ENCODE measurements at regions of chr21 and their contacts with region 1.

Region 1: DNA sequence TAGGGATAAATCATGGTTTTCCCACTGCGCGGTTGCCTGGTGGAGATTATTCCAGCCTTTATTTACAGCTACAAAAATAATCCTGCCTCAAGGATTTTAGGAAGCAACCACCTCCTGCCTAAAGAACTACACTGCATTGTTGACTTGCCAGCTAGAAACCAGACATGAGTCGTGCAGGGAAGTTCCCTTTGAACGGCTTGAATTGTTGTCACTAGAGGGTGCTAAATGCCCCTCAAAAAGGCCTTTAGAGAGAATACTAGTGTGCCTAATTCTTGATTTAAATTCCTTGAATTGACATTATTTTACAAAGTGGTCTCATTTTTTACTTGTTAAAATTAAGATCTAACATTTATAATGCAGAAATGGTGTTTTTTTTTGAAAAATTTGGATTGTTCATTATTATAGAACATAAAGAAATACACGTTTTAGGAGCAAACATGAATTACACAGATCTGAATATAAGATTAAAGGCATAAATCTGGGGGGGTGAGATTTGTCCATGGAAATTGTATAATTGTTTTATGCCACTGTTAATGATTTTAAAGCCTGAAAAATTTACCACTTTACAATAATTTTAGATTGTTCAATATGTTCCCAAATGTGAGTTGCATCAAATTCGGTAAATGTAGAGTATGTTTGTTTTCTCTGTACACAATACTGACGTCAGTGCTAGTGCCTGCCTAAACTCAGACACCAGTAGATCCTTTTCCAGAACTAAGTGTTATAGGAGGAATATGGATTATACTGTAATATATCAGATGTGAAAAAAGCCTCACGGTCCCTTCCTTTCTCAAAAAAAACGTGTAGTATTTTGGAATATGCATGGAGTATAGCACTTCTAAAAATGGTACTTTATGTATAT is 7.6 kb upstream of the ERG start:
- DNase-seq: peak; percentile 40
- ATAC-seq: peak; percentile 76
- H3K4me3 Mint-ChIP-seq: no peak overlapping the region
- H3K27ac Mint-ChIP-seq: no peak overlapping the region
- H3K4me1 Mint-ChIP-seq: peaks cover 7% of the 10 kb centered on the region
- H3K27me3 Mint-ChIP-seq: peaks cover 19% of the 10 kb centered on the region

Region 2: GRCh38 chr21:37974081-37974480 is 531.8 kb before region 1 on chr21:
- CTCF ChIA-PET with region 1: no interaction called
- POLR2A ChIA-PET with region 1: no interaction called
- intact Hi-C with region 1: no loop called
- DNase-seq: no peak
- ATAC-seq: no peak
- H3K4me3 Mint-ChIP-seq: no peak overlapping the region
- H3K27ac Mint-ChIP-seq: no peak overlapping the region
- H3K4me1 Mint-ChIP-seq: no peaks in the 10 kb centered on the region
- H3K27me3 Mint-ChIP-seq: peaks cover 7% of the 10 kb centered on the region

Region 3: GRCh38 chr21:38478782-38479181 is 27.1 kb before region 1 on chr21:
- CTCF ChIA-PET with region 1: no interaction called
- POLR2A ChIA-PET with region 1: no interaction called
- intact Hi-C with region 1: no loop called
- DNase-seq: peak; percentile 52
- ATAC-seq: peak; percentile 94
- H3K4me3 Mint-ChIP-seq: no peak overlapping the region
- H3K27ac Mint-ChIP-seq: no peak overlapping the region
- H3K4me1 Mint-ChIP-seq: peaks cover 15% of the 10 kb centered on the region
- H3K27me3 Mint-ChIP-seq: peaks cover 56% of the 10 kb centered on the region

Region 4: DNA sequence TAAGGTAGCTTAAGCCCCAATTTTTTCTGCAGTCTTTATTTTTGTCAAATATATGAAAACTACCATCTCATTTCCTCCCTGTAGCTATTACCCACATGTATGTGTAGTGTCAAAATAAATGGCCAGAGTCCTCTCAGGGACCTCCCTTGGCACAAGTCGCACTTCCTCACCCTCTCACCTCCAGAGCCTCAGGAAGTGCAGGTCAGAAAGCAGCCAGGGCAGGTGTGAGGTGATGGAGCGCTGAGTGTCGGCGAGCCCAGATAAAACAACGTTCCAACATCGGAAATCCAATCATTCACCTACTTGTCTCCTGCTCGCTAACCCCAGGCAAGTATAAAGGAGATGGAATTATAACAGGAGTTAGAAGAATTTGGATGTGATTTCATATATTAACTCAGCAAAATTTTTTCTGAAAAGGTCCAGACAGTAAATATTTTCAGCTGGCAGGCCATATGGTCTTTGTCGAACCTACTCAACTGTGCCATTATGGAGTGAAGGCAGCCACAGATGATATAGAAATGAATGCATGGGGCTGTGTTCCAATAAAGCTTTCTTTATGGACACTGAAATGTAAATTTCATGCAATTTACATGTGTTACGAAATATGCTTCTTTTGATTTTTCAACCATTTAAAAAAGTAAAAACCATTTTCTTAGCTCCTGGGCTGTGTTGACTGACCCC is 69.2 kb after region 1 on chr21:
- CTCF ChIA-PET with region 1: no interaction called
- POLR2A ChIA-PET with region 1: no interaction called
- intact Hi-C with region 1: no loop called
- DNase-seq: no peak
- ATAC-seq: no peak
- H3K4me3 Mint-ChIP-seq: no peak overlapping the region
- H3K27ac Mint-ChIP-seq: no peak overlapping the region
- H3K4me1 Mint-ChIP-seq: no peaks in the 10 kb centered on the region
- H3K27me3 Mint-ChIP-seq: no peaks in the 10 kb centered on the region

Region 5: DNA sequence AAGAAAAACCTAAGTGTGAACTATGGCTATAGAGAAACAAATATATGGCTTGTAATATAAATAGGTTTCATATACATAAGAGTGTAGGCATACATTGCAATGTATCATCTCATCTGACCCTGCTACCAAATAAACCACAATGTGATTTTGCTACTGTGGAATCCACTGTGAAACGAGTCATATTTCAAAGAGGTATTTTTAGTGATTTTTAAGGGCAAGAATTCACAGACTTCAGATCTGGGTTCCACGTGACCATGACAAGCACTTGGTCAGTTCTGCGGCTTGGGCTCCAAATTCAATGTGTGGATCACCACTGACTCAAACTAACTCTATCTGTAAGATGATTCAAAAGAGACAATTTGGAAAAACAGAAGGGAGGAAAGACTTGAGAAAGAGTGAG is 139.4 kb after region 1 on chr21:
- CTCF ChIA-PET with region 1: no interaction called
- POLR2A ChIA-PET with region 1: no interaction called
- intact Hi-C with region 1: loop called in 1 of 2 experiments (anchors 10 kb)
- DNase-seq: no peak
- ATAC-seq: peak; percentile 31
- H3K4me3 Mint-ChIP-seq: no peak overlapping the region
- H3K27ac Mint-ChIP-seq: peak overlapping the region; percentile 51
- H3K4me1 Mint-ChIP-seq: peaks cover 19% of the 10 kb centered on the region
- H3K27me3 Mint-ChIP-seq: peaks cover 36% of the 10 kb centered on the region

Region 6: DNA sequence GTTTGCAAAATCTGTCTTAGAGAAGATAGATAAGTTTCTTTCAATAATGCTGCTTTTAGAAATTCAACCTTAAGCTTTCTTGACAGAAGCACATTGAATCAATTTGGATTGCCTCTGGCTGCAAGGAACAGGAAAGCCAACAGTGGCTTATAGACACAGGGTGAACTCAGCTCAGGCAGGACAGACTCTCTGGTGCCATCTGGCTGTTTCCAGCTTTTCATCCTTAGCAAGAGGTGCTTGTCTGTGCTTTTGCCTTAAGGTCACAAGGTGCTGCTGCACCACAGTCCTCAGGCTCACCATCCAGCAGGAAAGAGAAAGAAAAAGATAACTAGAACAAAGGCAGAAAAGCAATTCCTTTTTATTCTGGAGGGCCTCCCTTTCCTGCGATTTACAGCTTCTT is 206.2 kb after region 1 on chr21:
- CTCF ChIA-PET with region 1: no interaction called
- POLR2A ChIA-PET with region 1: no interaction called
- intact Hi-C with region 1: loop called (anchors 5 to 10 kb)
- DNase-seq: peak; percentile 32
- ATAC-seq: no peak
- H3K4me3 Mint-ChIP-seq: no peak overlapping the region
- H3K27ac Mint-ChIP-seq: no peak overlapping the region
- H3K4me1 Mint-ChIP-seq: no peaks in the 10 kb centered on the region
- H3K27me3 Mint-ChIP-seq: peaks cover 2% of the 10 kb centered on the region

Region 7: DNA sequence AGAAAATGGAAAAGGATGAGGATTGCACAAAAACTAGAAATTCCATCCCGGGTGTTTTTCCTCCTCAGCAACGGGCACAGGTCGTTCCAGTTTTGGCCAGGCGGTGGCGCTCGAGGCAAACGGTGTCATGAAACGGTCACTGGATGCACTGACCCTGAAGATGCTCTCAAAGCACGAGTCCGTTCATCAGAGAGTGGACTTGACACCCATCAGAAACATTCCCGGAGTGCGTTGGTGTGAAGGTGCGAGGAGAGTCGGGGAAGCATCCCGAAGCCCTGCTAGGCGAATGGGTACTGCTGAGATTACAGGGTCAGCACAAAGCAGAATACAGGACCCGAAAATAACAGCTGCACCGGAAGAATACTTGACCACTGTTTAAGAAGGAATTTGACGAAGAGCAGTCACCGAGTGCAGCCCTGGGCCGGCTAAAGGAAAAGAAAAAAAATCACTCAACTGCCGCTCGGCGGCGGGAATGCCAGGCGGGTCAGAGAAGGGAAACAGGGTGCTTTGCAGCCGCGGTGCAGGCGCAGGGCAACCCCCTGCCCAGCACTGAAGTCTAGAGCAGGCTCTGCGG is 228.2 kb after region 1 on chr21:
- CTCF ChIA-PET with region 1: interaction called, 3 read pairs
- POLR2A ChIA-PET with region 1: no interaction called
- intact Hi-C with region 1: loop called in 1 of 2 experiments (anchors 1 kb)
- DNase-seq: peak; percentile 84
- ATAC-seq: peak; percentile 60
- H3K4me3 Mint-ChIP-seq: peak overlapping the region; percentile 74
- H3K27ac Mint-ChIP-seq: peak overlapping the region; percentile 67
- H3K4me1 Mint-ChIP-seq: peaks cover 11% of the 10 kb centered on the region
- H3K27me3 Mint-ChIP-seq: peaks cover 17% of the 10 kb centered on the region

Region 8: GRCh38 chr21:39137248-39138178 is 631.6 kb after region 1 on chr21:
- CTCF ChIA-PET with region 1: interaction called, 4 read pairs
- POLR2A ChIA-PET with region 1: no interaction called
- intact Hi-C with region 1: loop called (anchors 1 to 5 kb)
- DNase-seq: peak; percentile 26
- ATAC-seq: peak; percentile 42
- H3K4me3 Mint-ChIP-seq: no peak overlapping the region
- H3K27ac Mint-ChIP-seq: no peak overlapping the region
- H3K4me1 Mint-ChIP-seq: no peaks in the 10 kb centered on the region
- H3K27me3 Mint-ChIP-seq: no peaks in the 10 kb centered on the region

Region 9: DNA sequence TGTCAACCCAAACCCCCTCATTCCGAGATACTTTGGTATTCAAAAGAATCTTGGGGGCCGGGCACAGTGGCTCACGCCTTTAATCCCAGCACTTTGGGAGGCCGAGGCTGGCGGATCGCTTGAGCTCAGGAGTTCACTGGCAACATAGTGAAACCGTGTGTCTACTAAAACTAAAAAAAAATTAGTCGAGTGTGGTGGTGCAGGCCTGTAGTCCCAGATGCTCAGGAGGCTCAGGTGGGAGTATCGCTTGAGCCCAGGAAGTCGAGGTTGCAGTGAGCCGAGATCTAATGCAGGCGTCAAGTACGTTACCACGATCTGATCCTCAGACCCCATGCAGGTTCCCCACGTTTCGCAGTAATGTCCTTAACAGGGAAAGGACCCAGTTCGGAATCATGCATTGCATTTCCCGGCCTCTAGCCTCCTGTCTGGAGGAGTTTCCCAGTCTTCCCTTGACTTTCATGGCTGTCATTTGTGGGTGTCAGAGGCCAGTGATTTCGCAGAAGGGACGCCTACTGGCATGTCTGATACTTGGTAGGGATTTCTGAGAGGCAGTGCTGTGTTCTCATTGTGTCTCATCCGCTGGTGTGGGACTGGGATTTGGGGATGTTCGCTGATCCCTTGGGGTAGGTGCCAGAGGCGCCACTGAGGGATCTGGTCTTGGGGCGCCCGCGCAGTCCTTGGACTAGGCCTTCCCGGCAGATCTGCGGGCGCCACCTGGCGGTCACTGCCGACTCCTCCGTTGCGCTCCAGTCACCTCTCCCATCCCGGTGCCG is 882.3 kb after region 1 on chr21:
- CTCF ChIA-PET with region 1: no interaction called
- POLR2A ChIA-PET with region 1: no interaction called
- intact Hi-C with region 1: loop called in 1 of 2 experiments (anchors 2 kb)
- DNase-seq: peak; percentile 95
- ATAC-seq: peak; percentile 83
- H3K4me3 Mint-ChIP-seq: peak overlapping the region; percentile 73
- H3K27ac Mint-ChIP-seq: peak overlapping the region; percentile 89
- H3K4me1 Mint-ChIP-seq: peaks cover 25% of the 10 kb centered on the region
- H3K27me3 Mint-ChIP-seq: no peaks in the 10 kb centered on the region